ENCODE measurements at regions of chr19 and their contacts with region 1.

Region 1: GRCh38 chr19:18333662-18334389 is 6.6 kb upstream of the PGPEP1 start:
- DNase-seq: no peak
- H3K4me3 ChIP-seq: no peak overlapping the region
- H3K27ac ChIP-seq: no peak overlapping the region
- H3K4me1 ChIP-seq: peaks cover 4% of the 10 kb centered on the region
- H3K27me3 ChIP-seq: no peaks in the 10 kb centered on the region
- CTCF ChIP-seq: no peak
- EP300 ChIP-seq: no peak
- POLR2A ChIP-seq: no peak

Region 2: GRCh38 chr19:18266771-18267686 is 66.8 kb before region 1 on chr19:
- intact Hi-C with region 1: loop called in 1 of 4 experiments (anchors 5 kb)
- DNase-seq: peak; percentile 10 to 60 (median 44)
- H3K4me3 ChIP-seq: no peak overlapping the region
- H3K27ac ChIP-seq: no peak overlapping the region
- H3K4me1 ChIP-seq: no peaks in the 10 kb centered on the region
- H3K27me3 ChIP-seq: no peaks in the 10 kb centered on the region
- CTCF ChIP-seq: no peak
- EP300 ChIP-seq: no peak
- POLR2A ChIP-seq: no peak

Region 3: GRCh38 chr19:18428787-18429674 is 95.2 kb after region 1 on chr19:
- intact Hi-C with region 1: no loop called
- DNase-seq: peak; percentile 88 to 95 (median 92)
- H3K4me3 ChIP-seq: peak overlapping the region; percentile 36
- H3K27ac ChIP-seq: peak overlapping the region; percentile 77 to 87
- H3K4me1 ChIP-seq: peaks cover 26% of the 10 kb centered on the region
- H3K27me3 ChIP-seq: no peaks in the 10 kb centered on the region
- CTCF ChIP-seq: no peak
- EP300 ChIP-seq: no peak
- POLR2A ChIP-seq: peak; percentile 32

Measured in ovary (tissue), 10 donors.